Heart left ventricle (tissue), 16 donors: ENCODE measurements at regions of chr9 and their contacts with region 1.

Region 1: GRCh38 chr9:28539432-28540070 is 966.3 kb upstream of the C9orf72 start:
- DNase-seq: no peak
- ATAC-seq: no peak
- H3K4me3 ChIP-seq: no peak overlapping the region
- H3K27ac ChIP-seq: no peak overlapping the region
- H3K4me1 ChIP-seq: no peaks in the 10 kb centered on the region
- H3K27me3 ChIP-seq: no peaks in the 10 kb centered on the region
- CTCF ChIP-seq: no peak
- POLR2A ChIP-seq: no peak

Region 2: GRCh38 chr9:28471261-28471660 is 68.3 kb before region 1 on chr9:
- intact Hi-C with region 1: loop called in 1 of 10 experiments (anchors 10 kb)
- DNase-seq: no peak
- ATAC-seq: no peak
- H3K4me3 ChIP-seq: no peak overlapping the region
- H3K27ac ChIP-seq: no peak overlapping the region
- H3K4me1 ChIP-seq: no peaks in the 10 kb centered on the region
- H3K27me3 ChIP-seq: no peaks in the 10 kb centered on the region
- CTCF ChIP-seq: no peak
- POLR2A ChIP-seq: no peak

Region 3: GRCh38 chr9:28487561-28487960 is 52.0 kb before region 1 on chr9:
- intact Hi-C with region 1: loop called in 1 of 10 experiments (anchors 10 kb)
- DNase-seq: no peak
- ATAC-seq: no peak
- H3K4me3 ChIP-seq: no peak overlapping the region
- H3K27ac ChIP-seq: no peak overlapping the region
- H3K4me1 ChIP-seq: no peaks in the 10 kb centered on the region
- H3K27me3 ChIP-seq: no peaks in the 10 kb centered on the region
- CTCF ChIP-seq: no peak
- POLR2A ChIP-seq: no peak

Region 4: DNA sequence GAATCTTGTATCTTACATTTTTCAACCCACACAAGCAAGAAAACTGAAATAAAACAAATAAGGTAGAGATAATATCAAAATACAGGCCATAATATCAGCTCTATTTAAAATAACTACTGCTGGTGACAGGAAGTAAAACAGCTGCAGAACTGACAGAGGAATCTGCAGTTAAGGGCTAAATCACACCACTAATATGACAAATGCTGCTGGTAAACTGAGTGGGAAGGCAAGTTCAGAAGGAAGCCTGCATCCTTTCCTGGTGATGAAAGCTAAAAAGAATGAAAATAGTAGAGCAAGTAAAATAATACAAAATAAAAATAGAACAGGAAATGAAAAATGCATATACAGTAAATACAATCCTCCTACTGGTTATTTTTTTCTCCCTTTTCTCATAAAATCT is 327.4 kb after region 1 on chr9:
- intact Hi-C with region 1: no loop called
- DNase-seq: no peak
- ATAC-seq: no peak
- H3K4me3 ChIP-seq: no peak overlapping the region
- H3K27ac ChIP-seq: no peak overlapping the region
- H3K4me1 ChIP-seq: no peaks in the 10 kb centered on the region
- H3K27me3 ChIP-seq: no peaks in the 10 kb centered on the region
- CTCF ChIP-seq: no peak
- POLR2A ChIP-seq: no peak